ENCODE measurements at regions of chr7 and their contacts with region 1.

Region 1: GRCh38 chr7:31338706-31339105 is 1.8 kb downstream of the NEUROD6 start:
- DNase-seq: no peak

Region 2: GRCh38 chr7:31358467-31358866 is 19.8 kb after region 1 on chr7:
- intact Hi-C with region 1: loop called in 1 of 2 experiments (anchors 1 kb)
- DNase-seq: no peak

Region 3: DNA sequence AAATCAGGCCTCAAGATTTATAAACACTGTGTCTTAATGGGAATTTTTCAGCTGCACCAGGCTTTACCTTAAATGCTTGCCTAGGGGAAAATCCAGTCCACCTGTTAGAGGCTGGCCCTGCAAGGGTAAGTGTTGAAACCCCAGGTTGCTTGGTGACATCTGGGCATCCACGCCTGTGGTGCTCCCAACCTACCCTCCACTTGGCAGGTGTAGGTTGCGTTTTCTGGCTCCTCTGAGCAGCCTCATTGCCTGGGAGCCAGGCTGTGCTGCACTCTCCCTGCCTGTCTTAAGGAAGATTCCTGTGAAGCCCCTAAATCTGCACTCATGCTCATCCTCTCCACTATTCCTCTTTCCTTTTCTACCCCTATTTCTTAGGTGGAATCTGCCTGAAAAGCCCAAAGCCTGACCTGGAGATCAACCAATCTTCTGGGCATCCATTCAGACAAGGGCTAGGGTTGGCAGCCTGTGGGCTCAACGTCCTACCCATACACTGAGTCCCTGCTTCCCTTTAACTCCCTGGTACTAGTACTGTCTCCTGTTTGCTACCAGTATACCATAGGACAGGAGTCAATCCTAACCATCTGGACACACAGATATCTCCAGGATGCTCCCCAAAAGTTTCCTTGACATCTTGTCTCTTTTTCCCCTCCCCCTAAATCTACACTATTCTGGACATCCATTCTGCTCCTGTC is 581.1 kb after region 1 on chr7:
- intact Hi-C with region 1: no loop called
- DNase-seq: no peak